CD4-positive, alpha-beta memory T cell (primary cell): ENCODE measurements at regions of chr1 and their contacts with region 1.

Region 1: GRCh38 chr1:100452641-100453040 is 85.3 kb upstream of the GPR88 start:
- DNase-seq: peak in 4 of 5 donors; percentile 73 to 86 (median 80)
- H3K4me3 ChIP-seq: no peak overlapping the region
- H3K4me3 Mint-ChIP-seq: peak overlapping the region in 7 of 8 donors; percentile 32 to 83 (median 58)
- H3K27ac ChIP-seq: peak overlapping the region; percentile 78
- H3K27ac Mint-ChIP-seq: peak overlapping the region; percentile 89 to 100 (median 98)
- H3K4me1 ChIP-seq: peaks cover 100% of the 10 kb centered on the region
- H3K4me1 Mint-ChIP-seq: peaks cover 58 to 93% (median 76%) of the 10 kb centered on the region in 4 donors
- H3K27me3 ChIP-seq: no peaks in the 10 kb centered on the region
- H3K27me3 Mint-ChIP-seq: no peaks in the 10 kb centered on the region

Region 2: DNA sequence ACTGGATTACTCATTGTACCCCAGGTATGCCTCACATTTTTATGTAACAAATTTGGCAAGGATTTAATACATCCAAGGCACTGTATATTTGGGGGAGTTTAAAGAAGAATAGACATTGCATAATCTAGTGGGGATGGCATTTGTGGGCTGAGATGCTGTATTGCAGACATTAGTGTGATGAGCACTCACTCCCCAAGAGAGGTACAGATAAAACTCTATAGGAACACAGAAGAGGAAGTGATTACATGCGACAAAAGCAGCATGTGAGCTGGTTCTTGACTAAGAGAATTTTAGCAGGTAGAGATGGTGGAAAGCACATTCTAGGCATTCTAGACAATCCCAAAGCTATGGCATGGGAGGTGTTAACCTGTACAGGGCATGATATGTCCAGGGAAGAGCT is 124.5 kb before region 1 on chr1:
- CTCF ChIA-PET with region 1: no interaction called
- POLR2A ChIA-PET with region 1: no interaction called
- intact Hi-C with region 1: no loop called
- DNase-seq: no peak
- H3K4me3 ChIP-seq: no peak overlapping the region
- H3K4me3 Mint-ChIP-seq: no peak overlapping the region
- H3K27ac ChIP-seq: no peak overlapping the region
- H3K27ac Mint-ChIP-seq: no peak overlapping the region
- H3K4me1 ChIP-seq: no peaks in the 10 kb centered on the region
- H3K4me1 Mint-ChIP-seq: no peaks in the 10 kb centered on the region
- H3K27me3 ChIP-seq: no peaks in the 10 kb centered on the region
- H3K27me3 Mint-ChIP-seq: no peaks in the 10 kb centered on the region

Region 3: GRCh38 chr1:100394285-100394684 is 58.4 kb before region 1 on chr1:
- CTCF ChIA-PET with region 1: interaction called, 30 read pairs
- POLR2A ChIA-PET with region 1: interaction called, 27 read pairs
- intact Hi-C with region 1: no loop called
- DNase-seq: no peak
- H3K4me3 ChIP-seq: no peak overlapping the region
- H3K4me3 Mint-ChIP-seq: peak overlapping the region; percentile 4 to 80 (median 70)
- H3K27ac ChIP-seq: peak overlapping the region; percentile 54
- H3K27ac Mint-ChIP-seq: peak overlapping the region; percentile 73 to 93 (median 88)
- H3K4me1 ChIP-seq: peaks cover 100% of the 10 kb centered on the region
- H3K4me1 Mint-ChIP-seq: peaks cover 78 to 99% (median 90%) of the 10 kb centered on the region in 4 donors
- H3K27me3 ChIP-seq: no peaks in the 10 kb centered on the region
- H3K27me3 Mint-ChIP-seq: no peaks in the 10 kb centered on the region

Region 4: GRCh38 chr1:100430325-100430813 is 22.3 kb before region 1 on chr1:
- CTCF ChIA-PET with region 1: interaction called, 76 read pairs
- POLR2A ChIA-PET with region 1: interaction called, 272 read pairs
- intact Hi-C with region 1: no loop called
- DNase-seq: no peak
- H3K4me3 ChIP-seq: no peak overlapping the region
- H3K4me3 Mint-ChIP-seq: peak overlapping the region in 3 of 8 donors; percentile 3 to 26 (median 13)
- H3K27ac ChIP-seq: no peak overlapping the region
- H3K27ac Mint-ChIP-seq: peak overlapping the region in 6 of 7 donors; percentile 35 to 76 (median 59)
- H3K4me1 ChIP-seq: peaks cover 78% of the 10 kb centered on the region
- H3K4me1 Mint-ChIP-seq: peaks cover 50 to 76% (median 64%) of the 10 kb centered on the region in 4 donors
- H3K27me3 ChIP-seq: no peaks in the 10 kb centered on the region
- H3K27me3 Mint-ChIP-seq: no peaks in the 10 kb centered on the region

Region 5: GRCh38 chr1:100510451-100510850 is 57.8 kb after region 1 on chr1:
- CTCF ChIA-PET with region 1: no interaction called
- POLR2A ChIA-PET with region 1: no interaction called
- intact Hi-C with region 1: no loop called
- DNase-seq: no peak
- H3K4me3 ChIP-seq: no peak overlapping the region
- H3K4me3 Mint-ChIP-seq: no peak overlapping the region
- H3K27ac ChIP-seq: no peak overlapping the region
- H3K27ac Mint-ChIP-seq: no peak overlapping the region
- H3K4me1 ChIP-seq: peaks cover 8% of the 10 kb centered on the region
- H3K4me1 Mint-ChIP-seq: peaks cover 10 to 29% (median 15%) of the 10 kb centered on the region in 4 donors
- H3K27me3 ChIP-seq: no peaks in the 10 kb centered on the region
- H3K27me3 Mint-ChIP-seq: no peaks in the 10 kb centered on the region